ENCODE measurements at regions of chr5 and their contacts with region 1.

Region 1: GRCh38 chr5:149990518-149991376 is 9.7 kb downstream of the TIGD6 start:
- DNase-seq: peak; percentile 79
- H3K4me3 ChIP-seq: no peak overlapping the region
- H3K27ac ChIP-seq: no peak overlapping the region
- H3K4me1 ChIP-seq: no peaks in the 10 kb centered on the region
- H3K27me3 ChIP-seq: no peaks in the 10 kb centered on the region
- CTCF ChIP-seq: peak; percentile 78 to 83
- POLR2A ChIP-seq: no peak

Region 2: GRCh38 chr5:149828161-149828884 is 162.4 kb before region 1 on chr5:
- CTCF ChIA-PET with region 1: interaction called, 639 read pairs
- POLR2A ChIA-PET with region 1: no interaction called
- dilution Hi-C with region 1: no loop called
- intact Hi-C with region 1: no loop called
- DNase-seq: peak; percentile 89
- H3K4me3 ChIP-seq: no peak overlapping the region
- H3K27ac ChIP-seq: no peak overlapping the region
- H3K4me1 ChIP-seq: no peaks in the 10 kb centered on the region
- H3K27me3 ChIP-seq: no peaks in the 10 kb centered on the region
- CTCF ChIP-seq: peak; percentile 83 to 92
- POLR2A ChIP-seq: no peak

Region 3: GRCh38 chr5:149852641-149853330 is 138.0 kb before region 1 on chr5:
- CTCF ChIA-PET with region 1: interaction called, 42 read pairs
- POLR2A ChIA-PET with region 1: no interaction called
- dilution Hi-C with region 1: no loop called
- intact Hi-C with region 1: loop called (anchors 1 kb)
- DNase-seq: peak; percentile 75
- H3K4me3 ChIP-seq: no peak overlapping the region
- H3K27ac ChIP-seq: no peak overlapping the region
- H3K4me1 ChIP-seq: peaks cover 7% of the 10 kb centered on the region
- H3K27me3 ChIP-seq: no peaks in the 10 kb centered on the region
- CTCF ChIP-seq: peak; percentile 89 to 98
- POLR2A ChIP-seq: no peak

Region 4: GRCh38 chr5:149938791-149939358 is 51.9 kb before region 1 on chr5:
- CTCF ChIA-PET with region 1: interaction called, 6 read pairs
- POLR2A ChIA-PET with region 1: no interaction called
- dilution Hi-C with region 1: no loop called
- intact Hi-C with region 1: loop called (anchors 2 kb)
- DNase-seq: peak; percentile 77
- H3K4me3 ChIP-seq: no peak overlapping the region
- H3K27ac ChIP-seq: peak overlapping the region; percentile 88
- H3K4me1 ChIP-seq: peaks cover 33% of the 10 kb centered on the region
- H3K27me3 ChIP-seq: no peaks in the 10 kb centered on the region
- CTCF ChIP-seq: no peak
- POLR2A ChIP-seq: no peak

Region 5: DNA sequence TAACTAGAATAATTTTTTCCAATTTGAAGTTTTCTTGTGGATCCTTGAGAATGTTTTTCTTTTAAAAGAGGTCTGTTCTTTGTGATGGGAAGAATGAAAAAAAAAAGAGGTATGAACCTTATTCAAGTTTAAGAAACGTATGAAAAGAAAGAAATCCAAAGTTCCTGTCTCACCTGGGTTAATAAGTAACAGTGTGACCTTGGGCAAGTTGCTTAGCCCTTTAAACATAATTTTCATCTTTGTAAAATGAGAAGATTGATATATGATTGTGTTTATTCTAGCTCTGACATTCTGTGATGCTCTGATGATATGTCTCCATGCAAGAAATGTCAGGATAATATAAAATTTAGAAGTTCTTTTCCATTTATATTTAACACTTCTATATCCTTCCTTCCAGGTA is 10.9 kb before region 1 on chr5:
- CTCF ChIA-PET with region 1: interaction called, 38 read pairs
- POLR2A ChIA-PET with region 1: no interaction called
- dilution Hi-C with region 1: no loop called
- intact Hi-C with region 1: no loop called
- DNase-seq: no peak
- H3K4me3 ChIP-seq: no peak overlapping the region
- H3K27ac ChIP-seq: no peak overlapping the region
- H3K4me1 ChIP-seq: no peaks in the 10 kb centered on the region
- H3K27me3 ChIP-seq: no peaks in the 10 kb centered on the region
- CTCF ChIP-seq: no peak
- POLR2A ChIP-seq: no peak

Region 6: DNA sequence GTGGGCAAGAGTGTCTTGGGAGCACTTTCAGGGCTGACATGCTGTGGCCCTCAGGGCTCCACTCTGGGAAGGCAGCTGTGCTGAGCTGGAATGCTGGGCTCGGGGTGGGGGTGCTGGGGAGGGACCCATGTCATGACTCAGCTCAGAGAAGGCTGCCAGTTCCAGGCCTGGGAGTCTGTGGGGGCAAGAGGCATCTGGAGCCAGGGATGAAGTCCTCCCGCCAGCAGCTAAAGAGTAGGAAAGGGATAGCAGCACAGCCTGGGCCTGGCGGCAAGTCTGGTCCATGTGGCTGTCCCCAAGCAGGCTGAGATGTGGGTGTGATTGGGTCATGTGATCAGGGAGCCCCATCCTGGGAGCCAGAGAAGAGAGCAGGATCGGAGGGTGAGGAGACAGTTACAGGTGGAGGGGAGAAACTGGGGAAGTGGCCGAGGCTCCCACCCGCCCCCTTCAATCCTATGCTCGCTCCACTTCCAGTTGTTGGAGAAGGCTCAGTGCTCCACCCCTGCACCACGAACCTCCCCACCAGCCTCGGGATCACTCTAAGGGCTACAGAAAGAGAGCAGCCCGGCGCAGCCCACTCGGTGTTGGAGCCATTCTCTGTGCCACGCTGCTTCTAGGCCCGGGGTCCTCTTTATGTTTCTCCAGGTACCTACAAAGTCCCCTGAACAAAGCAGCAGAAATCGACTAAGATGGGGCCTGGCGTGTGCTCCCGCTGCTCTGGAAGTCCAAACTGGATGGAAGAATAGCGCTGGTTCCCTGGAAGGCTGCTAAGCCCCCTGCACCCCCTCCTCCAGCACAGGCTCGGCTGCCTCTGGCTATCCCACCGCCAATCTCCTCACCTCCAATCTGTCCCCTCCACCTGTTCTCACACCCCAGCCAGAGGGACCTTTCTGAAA is 152.9 kb after region 1 on chr5:
- CTCF ChIA-PET with region 1: no interaction called
- POLR2A ChIA-PET with region 1: no interaction called
- dilution Hi-C with region 1: no loop called
- intact Hi-C with region 1: no loop called
- DNase-seq: no peak
- H3K4me3 ChIP-seq: no peak overlapping the region
- H3K27ac ChIP-seq: no peak overlapping the region
- H3K4me1 ChIP-seq: peaks cover 12% of the 10 kb centered on the region
- H3K27me3 ChIP-seq: no peaks in the 10 kb centered on the region
- CTCF ChIP-seq: no peak
- POLR2A ChIP-seq: no peak

Region 7: DNA sequence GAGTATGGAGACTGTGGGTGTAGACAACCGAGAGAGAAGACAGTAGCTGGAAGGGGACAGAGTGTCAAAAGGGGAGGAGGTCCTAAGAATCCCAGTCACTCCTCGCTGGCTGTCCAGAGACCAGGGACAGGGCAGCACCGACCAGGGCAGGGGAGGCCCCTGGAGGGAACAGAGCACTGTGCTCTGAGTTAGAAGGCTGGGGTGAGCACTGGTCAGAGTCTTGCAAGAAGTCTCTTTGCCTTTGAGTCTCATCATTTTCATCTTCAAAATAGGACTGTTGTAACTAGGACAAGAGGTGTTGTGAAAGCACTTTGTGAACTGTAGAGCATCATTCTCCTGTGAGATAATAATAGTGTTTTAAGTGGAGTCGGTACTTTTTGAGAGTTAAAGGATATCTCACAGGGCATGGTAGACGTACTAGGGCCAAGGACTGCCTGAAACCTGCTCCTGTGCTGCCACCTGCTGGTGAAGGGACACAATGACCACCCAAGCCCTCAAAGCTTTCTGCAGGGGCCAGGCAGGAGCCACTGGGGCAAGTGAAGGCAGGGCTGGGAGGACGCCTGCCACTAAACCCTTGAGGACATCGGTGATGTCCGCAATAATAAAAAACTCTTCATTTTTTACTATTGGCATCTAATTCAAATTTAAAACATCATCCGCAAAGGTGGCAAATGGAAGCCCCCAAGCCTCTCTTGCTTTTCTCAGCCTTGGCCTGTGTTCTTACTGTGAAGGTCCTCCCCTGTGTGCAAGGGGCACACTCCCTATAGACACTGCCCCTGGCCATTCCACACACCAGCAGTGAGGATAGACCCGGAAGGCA is 227.3 kb after region 1 on chr5:
- CTCF ChIA-PET with region 1: interaction called, 10 read pairs
- POLR2A ChIA-PET with region 1: no interaction called
- dilution Hi-C with region 1: no loop called
- intact Hi-C with region 1: loop called (anchors 1 kb)
- DNase-seq: peak; percentile 77
- H3K4me3 ChIP-seq: no peak overlapping the region
- H3K27ac ChIP-seq: no peak overlapping the region
- H3K4me1 ChIP-seq: no peaks in the 10 kb centered on the region
- H3K27me3 ChIP-seq: peaks cover 0 to 8% of the 10 kb centered on the region in 2 experiments
- CTCF ChIP-seq: peak; percentile 81 to 87
- POLR2A ChIP-seq: no peak

Measured in endothelial cell of umbilical vein (primary cell).